CD8-positive, alpha-beta T cell (primary cell): ENCODE measurements at regions of chr19 and their contacts with region 1.

Region 1: GRCh38 chr19:4457654-4458395 is at the start of gene UBXN6:
- DNase-seq: peak; percentile 95 to 99 (median 97)
- ATAC-seq: peak; percentile 96
- H3K4me3 ChIP-seq: peak within 1 kb of the TSS; percentile 47 to 70
- H3K4me3 Mint-ChIP-seq: peak within 1 kb of the TSS; percentile 89
- H3K27ac ChIP-seq: peak within 1 kb of the TSS; percentile 63 to 73
- H3K27ac Mint-ChIP-seq: peak within 1 kb of the TSS; percentile 92
- H3K4me1 ChIP-seq: peaks cover 12% of the 10 kb centered on the region
- H3K4me1 Mint-ChIP-seq: peaks cover 18% of the 10 kb centered on the region
- H3K27me3 ChIP-seq: no peaks in the 10 kb centered on the region
- H3K27me3 Mint-ChIP-seq: no peaks in the 10 kb centered on the region
- CTCF ChIP-seq: no peak
- total RNA-seq, gene UBXN6: 61.5 to 62.6 TPM

Region 2: DNA sequence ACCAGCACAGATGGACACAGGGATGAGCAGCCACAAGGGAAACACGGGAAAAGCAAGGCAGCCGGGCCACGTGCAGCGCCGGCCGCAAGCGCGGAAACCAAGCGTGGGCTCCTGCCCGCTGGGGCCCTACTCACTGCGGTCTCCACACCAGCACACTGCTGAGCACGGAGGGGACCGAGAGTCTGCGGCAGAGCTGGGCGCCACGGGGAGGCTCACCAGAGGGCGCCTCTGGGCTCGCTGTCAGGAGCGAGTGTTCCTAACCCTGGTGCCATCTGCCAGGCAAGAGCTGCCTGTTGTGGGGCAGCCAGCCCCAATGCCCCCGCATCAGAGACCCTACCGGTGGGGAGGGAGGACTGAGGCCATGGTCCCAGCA is 88.0 kb before region 1 on chr19:
- CTCF ChIA-PET with region 1: no interaction called
- POLR2A ChIA-PET with region 1: no interaction called
- intact Hi-C with region 1: loop called in 1 of 2 experiments (anchors 1 kb)
- DNase-seq: peak; percentile 56 to 86 (median 75)
- ATAC-seq: peak; percentile 70
- H3K4me3 ChIP-seq: peak overlapping the region; percentile 58 to 65
- H3K4me3 Mint-ChIP-seq: peak overlapping the region; percentile 91
- H3K27ac ChIP-seq: peak overlapping the region; percentile 67 to 87
- H3K27ac Mint-ChIP-seq: peak overlapping the region; percentile 96
- H3K4me1 ChIP-seq: peaks cover 35% of the 10 kb centered on the region
- H3K4me1 Mint-ChIP-seq: peaks cover 32% of the 10 kb centered on the region
- H3K27me3 ChIP-seq: no peaks in the 10 kb centered on the region
- H3K27me3 Mint-ChIP-seq: no peaks in the 10 kb centered on the region
- CTCF ChIP-seq: peak; percentile 57

Region 3: GRCh38 chr19:4471403-4472173 is 13.8 kb after region 1 on chr19:
- CTCF ChIA-PET with region 1: interaction called, 4 read pairs
- POLR2A ChIA-PET with region 1: interaction called, 26 read pairs
- intact Hi-C with region 1: loop called (anchors 1 kb)
- DNase-seq: peak; percentile 94 to 100 (median 97)
- ATAC-seq: peak; percentile 85
- H3K4me3 ChIP-seq: peak overlapping the region; percentile 55 to 63
- H3K4me3 Mint-ChIP-seq: no peak overlapping the region
- H3K27ac ChIP-seq: peak overlapping the region; percentile 70 to 72
- H3K27ac Mint-ChIP-seq: no peak overlapping the region
- H3K4me1 ChIP-seq: peaks cover 20% of the 10 kb centered on the region
- H3K4me1 Mint-ChIP-seq: peaks cover 22% of the 10 kb centered on the region
- H3K27me3 ChIP-seq: no peaks in the 10 kb centered on the region
- H3K27me3 Mint-ChIP-seq: no peaks in the 10 kb centered on the region
- CTCF ChIP-seq: no peak